ENCODE measurements at regions of chr15 and their contacts with region 1.

Region 1: GRCh38 chr15:65054333-65055200 is 9.4 kb downstream of the SLC51B start:
- DNase-seq: peak in 1 of 2 experiments; percentile 71
- H3K4me3 ChIP-seq: no peak overlapping the region
- H3K27ac ChIP-seq: no peak overlapping the region
- H3K4me1 ChIP-seq: peaks cover 36% of the 10 kb centered on the region
- H3K27me3 ChIP-seq: no peaks in the 10 kb centered on the region
- CTCF ChIP-seq: peak; percentile 80

Region 2: GRCh38 chr15:64071931-64072765 is 982.4 kb before region 1 on chr15:
- CTCF ChIA-PET with region 1: no interaction called
- POLR2A ChIA-PET with region 1: no interaction called
- intact Hi-C with region 1: no loop called
- DNase-seq: no peak
- H3K4me3 ChIP-seq: no peak overlapping the region
- H3K27ac ChIP-seq: no peak overlapping the region
- H3K4me1 ChIP-seq: no peaks in the 10 kb centered on the region
- H3K27me3 ChIP-seq: no peaks in the 10 kb centered on the region
- CTCF ChIP-seq: no peak

Region 3: DNA sequence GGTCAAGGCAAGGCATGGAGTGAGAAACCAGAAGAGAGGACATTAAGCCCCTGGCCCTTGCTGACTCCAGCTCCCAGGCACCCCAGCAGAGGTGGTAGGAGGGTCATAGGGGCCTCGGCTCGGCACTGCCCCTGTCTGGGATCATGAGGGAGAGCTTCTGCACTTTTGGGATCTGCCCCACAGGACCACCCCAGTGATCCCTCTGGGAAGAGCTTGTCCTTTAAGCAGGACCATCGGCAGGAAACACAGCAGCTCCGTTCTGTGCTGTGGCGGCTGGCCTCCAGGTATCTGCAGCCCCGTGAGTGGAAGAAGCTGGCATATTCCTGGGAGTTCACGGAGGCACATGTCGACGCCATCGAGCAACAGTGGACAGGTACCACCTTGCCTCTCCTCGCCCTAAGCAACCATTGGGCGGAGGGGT is 107.3 kb before region 1 on chr15:
- CTCF ChIA-PET with region 1: no interaction called
- POLR2A ChIA-PET with region 1: no interaction called
- intact Hi-C with region 1: no loop called
- DNase-seq: no peak
- H3K4me3 ChIP-seq: no peak overlapping the region
- H3K27ac ChIP-seq: no peak overlapping the region
- H3K4me1 ChIP-seq: no peaks in the 10 kb centered on the region
- H3K27me3 ChIP-seq: no peaks in the 10 kb centered on the region
- CTCF ChIP-seq: no peak

Region 4: GRCh38 chr15:65086017-65086679 is 31.6 kb after region 1 on chr15:
- CTCF ChIA-PET with region 1: no interaction called
- POLR2A ChIA-PET with region 1: no interaction called
- intact Hi-C with region 1: loop called (anchors 1 kb)
- DNase-seq: peak in 1 of 2 experiments; percentile 46
- H3K4me3 ChIP-seq: no peak overlapping the region
- H3K27ac ChIP-seq: no peak overlapping the region
- H3K4me1 ChIP-seq: no peaks in the 10 kb centered on the region
- H3K27me3 ChIP-seq: peaks cover 3% of the 10 kb centered on the region; the same call in 1 of the 2 replicates
- CTCF ChIP-seq: peak; percentile 72

Region 5: GRCh38 chr15:65101411-65101890 is 46.9 kb after region 1 on chr15:
- CTCF ChIA-PET with region 1: interaction called, 10 read pairs
- POLR2A ChIA-PET with region 1: no interaction called
- intact Hi-C with region 1: loop called (anchors 1 kb)
- DNase-seq: peak in 1 of 2 experiments; percentile 49
- H3K4me3 ChIP-seq: no peak overlapping the region
- H3K27ac ChIP-seq: no peak overlapping the region
- H3K4me1 ChIP-seq: no peaks in the 10 kb centered on the region
- H3K27me3 ChIP-seq: no peaks in the 10 kb centered on the region
- CTCF ChIP-seq: peak; percentile 77

Measured in PC-9 (cell line).